HepG2 (cell line): ENCODE measurements at regions of chr7 and their contacts with region 1.

Region 1: DNA sequence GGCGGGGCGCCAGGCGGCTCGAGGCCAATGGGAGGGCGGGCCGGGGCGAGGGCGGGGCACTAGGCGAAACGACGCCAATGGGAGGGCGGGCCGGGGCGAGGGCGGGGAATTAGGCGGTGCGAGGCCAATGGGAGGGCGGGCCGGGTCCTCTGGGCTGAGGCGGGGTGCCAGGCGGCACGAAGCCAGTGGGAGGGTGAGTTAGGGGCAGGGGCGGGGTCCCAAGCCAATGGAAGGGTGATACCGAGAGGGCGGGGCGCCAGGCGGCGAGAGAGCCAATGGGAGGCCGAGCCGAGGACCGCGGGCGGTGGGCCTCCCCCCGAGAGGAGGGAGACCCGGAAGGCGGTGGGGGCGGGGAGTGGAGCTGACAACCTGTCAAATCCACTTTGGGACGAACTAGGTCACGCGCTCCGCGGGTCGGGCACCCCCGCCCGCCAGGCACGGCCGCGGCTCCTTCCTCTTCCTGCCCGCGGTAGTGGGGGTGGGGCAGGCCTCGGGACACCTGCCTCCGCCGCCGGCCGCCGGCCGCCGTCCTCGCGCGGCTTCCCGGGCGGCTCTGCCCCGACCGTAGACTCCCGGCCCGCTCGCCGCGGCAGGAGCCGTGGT is 28.0 kb upstream of the KMT2C start:
- DNase-seq: peak; percentile 96
- ATAC-seq: peak; percentile 87
- H3K4me3 ChIP-seq: peak overlapping the region; percentile 92 to 96 (median 94)
- H3K27ac ChIP-seq: peak overlapping the region; percentile 98
- H3K4me1 ChIP-seq: peaks cover 37% of the 10 kb centered on the region
- H3K27me3 ChIP-seq: no peaks in the 10 kb centered on the region; a peak in 1 of 5 replicates
- CTCF ChIP-seq: no peak
- EP300 ChIP-seq: peak in 1 of 2 experiments; percentile 25; a peak in 1 of 4 replicates
- POLR2A ChIP-seq: peak; percentile 50 to 71; a peak in 3 of 4 replicates
- RAD21 ChIP-seq: peak; percentile 60; the same call in 1 of the 2 replicates

Region 2: GRCh38 chr7:152336754-152337368 is 126.9 kb before region 1 on chr7:
- CTCF ChIA-PET with region 1: no interaction called
- POLR2A ChIA-PET with region 1: no interaction called
- in situ Hi-C with region 1: no loop called
- intact Hi-C with region 1: loop called (anchors 10 kb)
- DNase-seq: peak; percentile 53
- ATAC-seq: peak; percentile 96
- H3K4me3 ChIP-seq: no peak overlapping the region
- H3K27ac ChIP-seq: no peak overlapping the region
- H3K4me1 ChIP-seq: peaks cover 11% of the 10 kb centered on the region
- H3K27me3 ChIP-seq: no peaks in the 10 kb centered on the region
- CTCF ChIP-seq: peak; percentile 75
- EP300 ChIP-seq: no peak
- POLR2A ChIP-seq: no peak
- RAD21 ChIP-seq: peak; percentile 45; the same call in 1 of the 2 replicates

Region 3: GRCh38 chr7:152424348-152425108 is 39.3 kb before region 1 on chr7:
- CTCF ChIA-PET with region 1: no interaction called
- POLR2A ChIA-PET with region 1: interaction called, 4 read pairs
- in situ Hi-C with region 1: no loop called
- intact Hi-C with region 1: loop called (anchors 5 kb)
- DNase-seq: no peak
- ATAC-seq: no peak
- H3K4me3 ChIP-seq: no peak overlapping the region
- H3K27ac ChIP-seq: no peak overlapping the region
- H3K4me1 ChIP-seq: peaks cover 38% of the 10 kb centered on the region
- H3K27me3 ChIP-seq: no peaks in the 10 kb centered on the region
- CTCF ChIP-seq: no peak
- EP300 ChIP-seq: no peak
- POLR2A ChIP-seq: no peak
- RAD21 ChIP-seq: no peak

Region 4: GRCh38 chr7:152436111-152436930 is 27.5 kb before region 1 on chr7:
- CTCF ChIA-PET with region 1: no interaction called
- POLR2A ChIA-PET with region 1: interaction called, 4 read pairs
- in situ Hi-C with region 1: no loop called
- intact Hi-C with region 1: loop called (anchors 2 kb)
- DNase-seq: peak; percentile 81
- ATAC-seq: peak; percentile 70
- H3K4me3 ChIP-seq: peak overlapping the region; percentile 50 to 69 (median 64); a peak in 5 of 6 replicates
- H3K27ac ChIP-seq: peak overlapping the region; percentile 85
- H3K4me1 ChIP-seq: peaks cover 28% of the 10 kb centered on the region
- H3K27me3 ChIP-seq: no peaks in the 10 kb centered on the region
- CTCF ChIP-seq: no peak
- EP300 ChIP-seq: peak in 1 of 2 experiments; percentile 26; a peak in 1 of 4 replicates
- POLR2A ChIP-seq: peak; percentile 29 to 49; a peak in 1 of 4 replicates
- RAD21 ChIP-seq: peak; percentile 30

Region 5: DNA sequence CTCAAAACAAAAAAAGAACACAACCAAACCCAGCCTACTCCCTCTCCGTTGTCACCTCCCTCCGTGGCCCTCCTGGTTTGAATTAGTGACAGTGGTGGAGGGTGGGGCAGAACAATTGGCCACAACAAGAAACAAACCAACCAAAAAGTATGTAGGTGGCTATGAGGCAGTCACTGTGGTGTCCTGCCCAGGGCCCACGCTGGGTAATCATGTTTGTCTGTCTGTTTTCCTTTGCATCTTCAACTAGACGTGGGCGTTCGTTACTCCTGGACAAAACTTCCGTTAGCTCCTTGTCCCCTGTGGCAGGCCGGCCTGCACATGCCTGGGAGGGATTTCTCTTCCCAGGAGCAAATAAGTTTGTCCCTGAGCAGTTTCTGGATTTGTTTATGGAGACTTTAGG is 133.7 kb after region 1 on chr7:
- CTCF ChIA-PET with region 1: no interaction called
- POLR2A ChIA-PET with region 1: no interaction called
- in situ Hi-C with region 1: no loop called
- intact Hi-C with region 1: no loop called
- DNase-seq: no peak
- ATAC-seq: peak; percentile 59
- H3K4me3 ChIP-seq: no peak overlapping the region
- H3K27ac ChIP-seq: no peak overlapping the region
- H3K4me1 ChIP-seq: no peaks in the 10 kb centered on the region
- H3K27me3 ChIP-seq: 0 out of 5 replicates have a peak, but pooled peaks cover 0 to 2% of the 10 kb centered on the region in 2 experiments
- CTCF ChIP-seq: no peak
- EP300 ChIP-seq: no peak
- POLR2A ChIP-seq: no peak
- RAD21 ChIP-seq: no peak